CD4-positive, alpha-beta memory T cell (primary cell): ENCODE measurements at regions of chr19 and their contacts with region 1.

Region 1: DNA sequence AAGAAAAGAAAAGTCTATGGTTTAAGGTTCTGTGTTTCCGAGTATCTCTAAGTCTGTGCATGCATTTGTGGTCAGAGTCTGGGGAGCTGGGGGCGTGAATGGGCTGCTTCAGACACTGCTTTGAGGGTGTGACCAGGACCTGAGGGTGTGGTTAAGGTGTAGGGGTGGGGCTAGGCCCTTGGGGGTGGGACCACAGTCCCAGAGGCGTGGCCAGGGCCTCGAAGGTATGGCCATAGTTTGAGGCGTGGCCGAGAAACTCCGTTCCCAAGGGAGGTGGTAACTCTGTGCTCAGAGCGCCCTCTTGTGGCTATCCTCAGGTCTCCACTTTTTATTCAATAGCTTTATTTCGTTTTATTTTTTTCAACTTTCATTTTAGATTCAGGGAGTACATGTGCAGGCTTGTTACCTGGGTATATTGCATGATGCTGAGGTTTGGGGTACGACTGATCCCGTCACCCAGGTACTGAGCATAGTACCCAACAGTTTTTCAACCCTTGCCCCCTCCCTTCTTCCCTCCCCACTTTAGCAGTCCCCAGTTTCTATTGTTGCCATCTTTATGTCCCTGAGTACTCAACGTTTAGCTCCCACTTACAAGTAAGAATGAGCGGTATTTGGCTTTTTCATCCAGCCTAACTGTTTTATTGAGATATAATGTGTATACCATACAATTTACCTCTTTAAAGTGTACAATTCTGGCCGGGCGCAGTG is 7.0 kb upstream of the CBLC start:
- DNase-seq: peak; percentile 95 to 99 (median 97)
- H3K4me3 ChIP-seq: no peak overlapping the region
- H3K4me3 Mint-ChIP-seq: peak overlapping the region; percentile 49 to 79 (median 70)
- H3K27ac ChIP-seq: no peak overlapping the region
- H3K27ac Mint-ChIP-seq: peak overlapping the region; percentile 79 to 97 (median 93)
- H3K4me1 ChIP-seq: peaks cover 23% of the 10 kb centered on the region
- H3K4me1 Mint-ChIP-seq: peaks cover 16 to 32% (median 28%) of the 10 kb centered on the region in 4 donors
- H3K27me3 ChIP-seq: no peaks in the 10 kb centered on the region
- H3K27me3 Mint-ChIP-seq: no peaks in the 10 kb centered on the region

Region 2: GRCh38 chr19:44689056-44689895 is 81.4 kb before region 1 on chr19:
- CTCF ChIA-PET with region 1: interaction called, 76 read pairs
- POLR2A ChIA-PET with region 1: interaction called, 7 read pairs
- intact Hi-C with region 1: loop called (anchors 1 kb)
- DNase-seq: peak; percentile 66 to 71 (median 68)
- H3K4me3 ChIP-seq: no peak overlapping the region
- H3K4me3 Mint-ChIP-seq: no peak overlapping the region
- H3K27ac ChIP-seq: no peak overlapping the region
- H3K27ac Mint-ChIP-seq: peak overlapping the region in 6 of 7 donors; percentile 8 to 80 (median 58)
- H3K4me1 ChIP-seq: peaks cover 22% of the 10 kb centered on the region
- H3K4me1 Mint-ChIP-seq: peaks cover 20 to 33% (median 26%) of the 10 kb centered on the region in 4 donors
- H3K27me3 ChIP-seq: no peaks in the 10 kb centered on the region
- H3K27me3 Mint-ChIP-seq: peaks cover 8 to 18% of the 10 kb centered on the region in 2 donors

Region 3: GRCh38 chr19:44723952-44724319 is 46.8 kb before region 1 on chr19:
- CTCF ChIA-PET with region 1: interaction called, 545 read pairs
- POLR2A ChIA-PET with region 1: interaction called, 71 read pairs
- intact Hi-C with region 1: loop called (anchors 1 kb)
- DNase-seq: peak; percentile 73 to 83 (median 74)
- H3K4me3 ChIP-seq: no peak overlapping the region
- H3K4me3 Mint-ChIP-seq: no peak overlapping the region
- H3K27ac ChIP-seq: no peak overlapping the region
- H3K27ac Mint-ChIP-seq: peak overlapping the region in 3 of 7 donors; percentile 13 to 77 (median 60)
- H3K4me1 ChIP-seq: peaks cover 15% of the 10 kb centered on the region
- H3K4me1 Mint-ChIP-seq: peaks cover 11 to 24% (median 14%) of the 10 kb centered on the region in 4 donors
- H3K27me3 ChIP-seq: no peaks in the 10 kb centered on the region
- H3K27me3 Mint-ChIP-seq: no peaks in the 10 kb centered on the region

Region 4: GRCh38 chr19:44752816-44753618 is 17.7 kb before region 1 on chr19:
- CTCF ChIA-PET with region 1: interaction called, 16 read pairs
- POLR2A ChIA-PET with region 1: interaction called, 8 read pairs
- intact Hi-C with region 1: loop called (anchors 1 kb)
- DNase-seq: peak; percentile 95 to 98 (median 97)
- H3K4me3 ChIP-seq: peak overlapping the region; percentile 15 to 53
- H3K4me3 Mint-ChIP-seq: peak overlapping the region; percentile 89 to 96 (median 93)
- H3K27ac ChIP-seq: peak overlapping the region; percentile 95
- H3K27ac Mint-ChIP-seq: peak overlapping the region; percentile 97 to 100 (median 98)
- H3K4me1 ChIP-seq: peaks cover 68% of the 10 kb centered on the region
- H3K4me1 Mint-ChIP-seq: peaks cover 38 to 76% (median 54%) of the 10 kb centered on the region in 4 donors
- H3K27me3 ChIP-seq: no peaks in the 10 kb centered on the region
- H3K27me3 Mint-ChIP-seq: no peaks in the 10 kb centered on the region

Region 5: GRCh38 chr19:44792281-44792680 is 21.6 kb after region 1 on chr19:
- CTCF ChIA-PET with region 1: no interaction called
- POLR2A ChIA-PET with region 1: no interaction called
- intact Hi-C with region 1: no loop called
- DNase-seq: no peak
- H3K4me3 ChIP-seq: no peak overlapping the region
- H3K4me3 Mint-ChIP-seq: no peak overlapping the region
- H3K27ac ChIP-seq: no peak overlapping the region
- H3K27ac Mint-ChIP-seq: no peak overlapping the region
- H3K4me1 ChIP-seq: peaks cover 15% of the 10 kb centered on the region
- H3K4me1 Mint-ChIP-seq: peaks cover 8 to 19% (median 14%) of the 10 kb centered on the region in 4 donors
- H3K27me3 ChIP-seq: no peaks in the 10 kb centered on the region
- H3K27me3 Mint-ChIP-seq: no peaks in the 10 kb centered on the region

Region 6: DNA sequence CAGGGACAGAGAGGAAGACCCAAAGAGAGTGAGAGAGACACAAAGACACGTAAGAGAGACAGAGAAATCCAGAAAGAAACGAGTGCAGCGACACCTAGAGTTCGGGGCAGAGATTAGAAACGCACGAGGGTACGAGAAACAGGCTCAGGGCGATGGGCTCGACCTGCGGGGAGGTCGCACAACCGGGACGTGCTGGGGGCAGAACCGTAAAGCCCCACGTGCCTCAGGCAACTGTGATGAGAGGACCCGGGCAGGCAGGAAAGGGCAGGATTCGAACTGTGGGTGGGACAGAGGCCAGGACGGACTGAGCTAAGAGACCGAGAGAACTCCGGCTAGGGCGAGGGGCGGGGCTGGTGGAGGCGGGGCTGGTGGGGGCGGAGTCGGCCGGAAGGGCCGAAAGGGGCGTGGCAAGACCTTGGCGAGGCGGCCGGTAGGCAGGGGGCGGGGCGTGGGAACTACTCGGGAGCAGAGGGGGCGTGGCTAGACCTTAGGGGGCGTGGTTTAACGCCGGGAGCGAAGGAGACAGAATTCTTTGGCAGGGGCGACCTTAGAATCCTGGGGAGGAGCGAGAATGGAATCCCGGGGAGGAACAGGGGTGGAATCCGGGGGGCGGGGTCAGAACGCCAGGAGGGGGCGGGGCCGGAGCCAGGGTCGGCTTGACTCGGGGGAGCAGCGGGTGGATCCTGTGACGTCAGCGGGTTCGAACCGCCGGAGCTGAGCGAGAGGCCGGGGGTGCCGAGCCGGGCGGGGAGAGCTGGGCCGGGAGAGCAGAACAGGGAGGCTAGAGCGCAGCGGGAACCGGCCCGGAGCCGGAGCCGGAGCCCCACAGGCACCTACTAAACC is 75.1 kb after region 1 on chr19 and contains the start of gene NECTIN2:
- CTCF ChIA-PET with region 1: interaction called, 3 read pairs
- POLR2A ChIA-PET with region 1: no interaction called
- intact Hi-C with region 1: loop called (anchors 1 kb)
- DNase-seq: peak; percentile 62 to 77 (median 70)
- H3K4me3 ChIP-seq: peak within 1 kb of the TSS; percentile 37 to 38
- H3K4me3 Mint-ChIP-seq: peak within 1 kb of the TSS; percentile 86 to 96 (median 90)
- H3K27ac ChIP-seq: peak within 1 kb of the TSS; percentile 14
- H3K27ac Mint-ChIP-seq: peak within 1 kb of the TSS; percentile 72 to 95 (median 87)
- H3K4me1 ChIP-seq: peaks cover 37% of the 10 kb centered on the region
- H3K4me1 Mint-ChIP-seq: peaks cover 13 to 36% (median 28%) of the 10 kb centered on the region in 4 donors
- H3K27me3 ChIP-seq: peaks cover 9% of the 10 kb centered on the region
- H3K27me3 Mint-ChIP-seq: peaks cover 5 to 7% of the 10 kb centered on the region in 2 donors
- total RNA-seq, gene NECTIN2: 0.84 to 1.7 TPM

Region 7: GRCh38 chr19:44890366-44891015 is 119.8 kb after region 1 on chr19:
- CTCF ChIA-PET with region 1: no interaction called
- POLR2A ChIA-PET with region 1: no interaction called
- intact Hi-C with region 1: no loop called
- DNase-seq: peak; percentile 100
- H3K4me3 ChIP-seq: peak overlapping the region; percentile 36 to 59
- H3K4me3 Mint-ChIP-seq: peak overlapping the region; percentile 80 to 95 (median 89)
- H3K27ac ChIP-seq: peak overlapping the region; percentile 83
- H3K27ac Mint-ChIP-seq: peak overlapping the region; percentile 83 to 97 (median 95)
- H3K4me1 ChIP-seq: peaks cover 22% of the 10 kb centered on the region
- H3K4me1 Mint-ChIP-seq: peaks cover 19 to 35% (median 28%) of the 10 kb centered on the region in 4 donors
- H3K27me3 ChIP-seq: no peaks in the 10 kb centered on the region
- H3K27me3 Mint-ChIP-seq: no peaks in the 10 kb centered on the region

Region 8: GRCh38 chr19:44974857-44975256 is 204.2 kb after region 1 on chr19:
- CTCF ChIA-PET with region 1: no interaction called
- POLR2A ChIA-PET with region 1: no interaction called
- intact Hi-C with region 1: no loop called
- DNase-seq: no peak
- H3K4me3 ChIP-seq: no peak overlapping the region
- H3K4me3 Mint-ChIP-seq: no peak overlapping the region
- H3K27ac ChIP-seq: no peak overlapping the region
- H3K27ac Mint-ChIP-seq: peak overlapping the region in 1 of 7 donors; percentile 37
- H3K4me1 ChIP-seq: no peaks in the 10 kb centered on the region
- H3K4me1 Mint-ChIP-seq: peaks cover 0 to 2% (median under 1%) of the 10 kb centered on the region in 4 donors
- H3K27me3 ChIP-seq: no peaks in the 10 kb centered on the region
- H3K27me3 Mint-ChIP-seq: no peaks in the 10 kb centered on the region